Activated T-helper 1 cell treated with anti-CD3 and anti-CD28 coated beads, Interleukin-12 subunit alpha, Interleukin-12 subunit beta, Interleukin-2, Interleukin-4 antibody, amounts not matched to agents 30 ng/mL and 10 ng/mL and 1 ng/mL, durations not matched to agents 14 hours and 24 hours and 36 hours (primary cell): ENCODE measurements at regions of chr6 and their contacts with region 1.

Region 1: GRCh38 chr6:87907521-87907920 is 140.1 kb upstream of the SPACA1 start:
- DNase-seq: peak; percentile 15
- H3K4me3 Mint-ChIP-seq: peak overlapping the region; percentile 15
- H3K27ac Mint-ChIP-seq: peak overlapping the region; percentile 72
- H3K4me1 Mint-ChIP-seq: peaks cover 33% of the 10 kb centered on the region
- H3K27me3 Mint-ChIP-seq: peaks cover 37% of the 10 kb centered on the region

Region 2: DNA sequence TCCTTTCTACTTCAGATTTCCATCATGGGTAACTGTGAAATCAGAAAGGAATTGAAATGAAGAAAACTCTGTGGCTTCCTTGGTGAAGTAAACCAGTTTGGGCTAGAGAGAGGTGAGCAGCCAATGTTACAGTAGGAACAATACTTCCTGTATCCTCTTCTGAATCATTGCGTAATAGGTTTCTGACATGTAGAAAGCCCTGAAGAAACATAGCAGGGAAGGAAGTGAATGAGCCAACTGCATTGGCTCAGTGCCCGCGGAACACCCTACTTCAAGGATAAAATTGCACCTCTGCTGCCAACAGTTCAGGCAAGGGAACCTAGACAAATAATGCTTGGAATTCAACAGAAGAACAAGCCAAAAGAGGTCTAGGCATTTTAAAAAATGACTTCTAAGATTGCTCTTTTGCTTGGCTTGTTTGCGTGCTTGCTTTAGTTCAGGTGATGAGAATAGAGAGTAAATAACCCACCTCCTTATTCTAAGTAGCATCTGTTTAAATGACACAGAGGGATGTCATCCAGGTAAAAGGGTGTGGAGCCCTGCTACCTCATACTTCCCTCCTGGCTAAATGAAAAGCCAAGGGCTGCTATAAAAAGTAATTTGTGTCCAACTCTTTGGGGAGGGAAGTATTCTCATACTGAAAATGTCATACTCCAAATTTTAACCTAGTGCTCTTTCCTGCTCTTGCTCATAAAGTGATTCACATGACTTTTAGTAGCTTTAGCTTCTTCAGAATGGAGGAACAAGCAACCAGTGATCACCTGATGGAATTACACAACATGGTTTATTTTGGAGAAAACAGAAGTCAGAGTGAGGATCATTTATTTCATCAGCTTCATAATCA is 175.5 kb before region 1 on chr6:
- intact Hi-C with region 1: loop called (anchors 5 kb)
- DNase-seq: no peak
- H3K4me3 Mint-ChIP-seq: no peak overlapping the region
- H3K27ac Mint-ChIP-seq: peak overlapping the region; percentile 67
- H3K4me1 Mint-ChIP-seq: peaks cover 27% of the 10 kb centered on the region
- H3K27me3 Mint-ChIP-seq: peaks cover 2% of the 10 kb centered on the region

Region 3: GRCh38 chr6:87832025-87832825 is 75.3 kb before region 1 on chr6:
- intact Hi-C with region 1: no loop called
- DNase-seq: no peak
- H3K4me3 Mint-ChIP-seq: peak overlapping the region; percentile 63
- H3K27ac Mint-ChIP-seq: no peak overlapping the region
- H3K4me1 Mint-ChIP-seq: peaks cover 14% of the 10 kb centered on the region
- H3K27me3 Mint-ChIP-seq: peaks cover 6% of the 10 kb centered on the region

Region 4: DNA sequence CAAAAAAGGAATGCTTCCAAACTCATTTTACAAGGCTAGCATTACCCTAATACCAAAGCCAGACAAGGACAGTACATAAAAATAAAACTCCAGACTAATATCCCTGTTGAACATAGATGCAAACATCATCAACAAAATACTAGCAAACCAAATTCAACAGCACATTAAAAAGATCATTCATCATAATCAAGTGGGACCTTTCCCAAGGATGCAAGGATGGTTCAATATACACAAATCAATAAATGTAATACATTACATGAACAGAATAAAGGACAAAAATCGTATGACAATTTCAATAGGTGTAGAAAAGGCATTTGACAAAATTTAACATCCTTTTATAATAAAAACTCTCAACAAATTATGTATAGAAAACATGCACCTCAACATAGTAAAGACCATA is 325.2 kb after region 1 on chr6:
- intact Hi-C with region 1: no loop called
- DNase-seq: no peak
- H3K4me3 Mint-ChIP-seq: no peak overlapping the region
- H3K27ac Mint-ChIP-seq: no peak overlapping the region
- H3K4me1 Mint-ChIP-seq: no peaks in the 10 kb centered on the region
- H3K27me3 Mint-ChIP-seq: no peaks in the 10 kb centered on the region